Activated naive CD4-positive, alpha-beta T cell treated with anti-CD3 and anti-CD28 coated beads for 36 hours (primary cell): ENCODE measurements at regions of chr12 and their contacts with region 1.

Region 1: GRCh38 chr12:12008931-12009611 is 61.7 kb upstream of the BCL2L14 start:
- DNase-seq: peak; percentile 87
- H3K4me3 Mint-ChIP-seq: peak overlapping the region; percentile 25
- H3K27ac Mint-ChIP-seq: peak overlapping the region; percentile 99
- H3K4me1 Mint-ChIP-seq: peaks cover 74% of the 10 kb centered on the region
- H3K27me3 Mint-ChIP-seq: no peaks in the 10 kb centered on the region

Region 2: DNA sequence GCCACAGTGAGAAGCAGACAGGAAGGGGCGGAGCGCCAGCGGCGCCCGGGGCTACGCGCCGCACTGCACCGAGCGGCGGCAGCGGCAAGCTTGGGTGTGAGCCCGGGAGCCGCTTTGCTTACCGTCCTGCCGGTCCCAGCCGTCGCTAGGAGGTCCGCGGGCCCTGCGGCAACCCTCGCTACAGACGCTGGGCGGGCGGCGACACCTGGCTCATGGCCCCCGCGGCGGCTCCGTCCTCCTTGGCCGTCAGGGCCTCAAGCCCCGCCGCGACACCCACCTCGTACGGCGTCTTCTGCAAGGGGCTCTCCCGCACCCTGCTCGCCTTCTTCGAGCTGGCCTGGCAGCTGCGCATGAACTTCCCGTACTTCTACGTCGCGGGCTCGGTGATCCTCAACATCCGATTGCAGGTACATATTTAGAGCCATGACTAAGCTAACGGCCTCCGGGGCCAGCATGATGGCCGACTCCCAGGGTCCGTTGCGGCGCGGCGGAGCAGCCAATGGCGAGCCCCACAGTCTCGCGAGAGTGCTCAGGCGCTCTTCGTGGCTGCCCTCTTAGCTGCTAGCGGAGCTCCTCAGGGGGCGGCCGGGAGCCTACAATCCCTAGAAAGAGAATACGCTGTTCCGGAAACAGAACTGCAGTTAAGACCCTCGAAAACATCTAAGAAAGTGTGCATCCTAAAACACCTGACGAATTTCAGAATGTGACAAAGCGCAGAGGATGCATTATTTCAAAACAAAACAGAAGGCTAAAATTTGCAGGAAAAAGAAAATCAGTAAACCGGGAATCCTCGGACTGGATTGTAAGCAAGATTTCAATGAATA is 837.7 kb before region 1 on chr12 and contains the start of gene SMIM10L1:
- CTCF ChIA-PET with region 1: no interaction called
- intact Hi-C with region 1: loop called (anchors 1 kb)
- DNase-seq: peak; percentile 94
- H3K4me3 Mint-ChIP-seq: peak within 1 kb of the TSS; percentile 97
- H3K27ac Mint-ChIP-seq: peak within 1 kb of the TSS; percentile 99
- H3K4me1 Mint-ChIP-seq: peaks cover 38% of the 10 kb centered on the region
- H3K27me3 Mint-ChIP-seq: no peaks in the 10 kb centered on the region
- total RNA-seq, gene SMIM10L1: 5.0 to 5.6 TPM

Region 3: DNA sequence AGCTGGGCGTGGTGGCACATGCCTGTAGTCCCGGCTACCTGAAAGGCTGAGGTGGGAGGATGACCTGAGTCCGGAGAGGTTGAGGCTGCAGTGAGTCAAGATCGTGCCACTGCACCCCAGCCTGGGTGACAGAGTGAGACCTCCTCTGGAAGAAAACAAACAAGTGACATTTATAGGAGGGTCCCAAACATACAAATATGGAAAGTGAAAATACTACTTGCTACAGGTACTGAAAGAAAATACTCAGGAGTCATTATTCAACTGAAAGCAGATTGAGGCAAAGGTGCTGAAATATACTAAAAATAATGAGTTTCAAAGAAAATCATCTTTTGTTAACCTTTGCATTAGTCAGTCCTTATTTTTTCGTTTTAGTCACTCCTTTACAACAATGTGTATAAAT is 306.1 kb before region 1 on chr12:
- CTCF ChIA-PET with region 1: no interaction called
- intact Hi-C with region 1: loop called (anchors 2 kb)
- DNase-seq: peak; percentile 14
- H3K4me3 Mint-ChIP-seq: no peak overlapping the region
- H3K27ac Mint-ChIP-seq: peak overlapping the region; percentile 76
- H3K4me1 Mint-ChIP-seq: peaks cover 49% of the 10 kb centered on the region
- H3K27me3 Mint-ChIP-seq: no peaks in the 10 kb centered on the region

Region 4: DNA sequence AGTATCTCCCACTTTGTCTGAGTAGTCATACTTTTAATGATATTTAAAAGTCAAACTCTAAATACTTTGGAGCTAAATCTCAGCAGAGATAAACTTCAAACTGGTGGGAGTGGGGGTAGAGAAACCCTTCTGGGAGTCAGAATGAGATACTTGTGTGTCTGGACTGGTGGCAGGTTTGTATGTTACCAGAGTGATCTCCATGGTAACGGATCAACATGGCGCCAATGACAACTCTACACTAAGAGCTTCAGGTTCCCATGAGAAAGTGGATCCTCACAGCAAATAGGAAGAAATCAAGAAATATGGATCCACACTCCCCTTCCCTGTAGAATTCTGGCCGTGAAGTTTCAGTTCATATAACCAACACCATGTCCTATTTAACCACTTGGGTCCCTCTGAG is 237.7 kb before region 1 on chr12:
- CTCF ChIA-PET with region 1: interaction called, 4 read pairs
- intact Hi-C with region 1: loop called (anchors 1 kb)
- DNase-seq: peak; percentile 41
- H3K4me3 Mint-ChIP-seq: no peak overlapping the region
- H3K27ac Mint-ChIP-seq: peak overlapping the region; percentile 68
- H3K4me1 Mint-ChIP-seq: peaks cover 94% of the 10 kb centered on the region
- H3K27me3 Mint-ChIP-seq: no peaks in the 10 kb centered on the region

Region 5: GRCh38 chr12:11836282-11837151 is 172.6 kb before region 1 on chr12:
- CTCF ChIA-PET with region 1: interaction called, 5 read pairs
- intact Hi-C with region 1: loop called (anchors 1 kb)
- DNase-seq: peak; percentile 92
- H3K4me3 Mint-ChIP-seq: no peak overlapping the region
- H3K27ac Mint-ChIP-seq: peak overlapping the region; percentile 97
- H3K4me1 Mint-ChIP-seq: peaks cover 68% of the 10 kb centered on the region
- H3K27me3 Mint-ChIP-seq: no peaks in the 10 kb centered on the region

Region 6: GRCh38 chr12:11958221-11959091 is 50.6 kb before region 1 on chr12:
- CTCF ChIA-PET with region 1: interaction called, 4 read pairs
- intact Hi-C with region 1: loop called (anchors 1 kb)
- DNase-seq: peak; percentile 84
- H3K4me3 Mint-ChIP-seq: peak overlapping the region; percentile 32
- H3K27ac Mint-ChIP-seq: peak overlapping the region; percentile 73
- H3K4me1 Mint-ChIP-seq: peaks cover 32% of the 10 kb centered on the region
- H3K27me3 Mint-ChIP-seq: peaks cover 11% of the 10 kb centered on the region

Region 7: GRCh38 chr12:12070674-12071656 is 61.9 kb after region 1 on chr12 and contains the start of gene BCL2L14:
- CTCF ChIA-PET with region 1: interaction called, 4 read pairs
- intact Hi-C with region 1: loop called (anchors 1 kb)
- DNase-seq: peak; percentile 52
- H3K4me3 Mint-ChIP-seq: peak within 1 kb of the TSS; percentile 85
- H3K27ac Mint-ChIP-seq: peak within 1 kb of the TSS; percentile 90
- H3K4me1 Mint-ChIP-seq: peaks cover 36% of the 10 kb centered on the region
- H3K27me3 Mint-ChIP-seq: no peaks in the 10 kb centered on the region
- total RNA-seq, gene BCL2L14: 19.4 to 21.8 TPM